CD4-positive, alpha-beta memory T cell (primary cell): ENCODE measurements at regions of chr16 and their contacts with region 1.

Region 1: GRCh38 chr16:2155091-2156021 is at the start of gene TRAF7:
- DNase-seq: peak; percentile 97 to 100 (median 99)
- H3K4me3 ChIP-seq: peak within 1 kb of the TSS; percentile 75 to 79
- H3K4me3 Mint-ChIP-seq: peak within 1 kb of the TSS; percentile 94 to 98 (median 95)
- H3K27ac ChIP-seq: peak within 1 kb of the TSS; percentile 83
- H3K27ac Mint-ChIP-seq: peak within 1 kb of the TSS; percentile 75 to 98 (median 94)
- H3K4me1 ChIP-seq: peaks cover 70% of the 10 kb centered on the region
- H3K4me1 Mint-ChIP-seq: peaks cover 30 to 63% (median 45%) of the 10 kb centered on the region in 4 donors
- H3K27me3 ChIP-seq: no peaks in the 10 kb centered on the region
- H3K27me3 Mint-ChIP-seq: no peaks in the 10 kb centered on the region
- total RNA-seq, gene TRAF7: 40.9 to 41.9 TPM

Region 2: GRCh38 chr16:1826691-1827575 is 328.4 kb before region 1 on chr16 and contains the starts of genes FAHD1 and HAGH:
- CTCF ChIA-PET with region 1: no interaction called
- POLR2A ChIA-PET with region 1: interaction called, 10 read pairs
- intact Hi-C with region 1: no loop called
- DNase-seq: peak; percentile 90 to 98 (median 93)
- H3K4me3 ChIP-seq: peak within 1 kb of the TSS; percentile 78 to 89
- H3K4me3 Mint-ChIP-seq: peak within 1 kb of the TSS; percentile 92 to 96 (median 94)
- H3K27ac ChIP-seq: peak within 1 kb of the TSS; percentile 73
- H3K27ac Mint-ChIP-seq: peak within 1 kb of the TSS; percentile 94 to 97 (median 95)
- H3K4me1 ChIP-seq: peaks cover 43% of the 10 kb centered on the region
- H3K4me1 Mint-ChIP-seq: peaks cover 17 to 58% (median 39%) of the 10 kb centered on the region in 4 donors
- H3K27me3 ChIP-seq: no peaks in the 10 kb centered on the region
- H3K27me3 Mint-ChIP-seq: no peaks in the 10 kb centered on the region
- total RNA-seq, gene FAHD1: 7.8 to 9.6 TPM
- total RNA-seq, gene HAGH: 73.7 to 77.8 TPM

Region 3: DNA sequence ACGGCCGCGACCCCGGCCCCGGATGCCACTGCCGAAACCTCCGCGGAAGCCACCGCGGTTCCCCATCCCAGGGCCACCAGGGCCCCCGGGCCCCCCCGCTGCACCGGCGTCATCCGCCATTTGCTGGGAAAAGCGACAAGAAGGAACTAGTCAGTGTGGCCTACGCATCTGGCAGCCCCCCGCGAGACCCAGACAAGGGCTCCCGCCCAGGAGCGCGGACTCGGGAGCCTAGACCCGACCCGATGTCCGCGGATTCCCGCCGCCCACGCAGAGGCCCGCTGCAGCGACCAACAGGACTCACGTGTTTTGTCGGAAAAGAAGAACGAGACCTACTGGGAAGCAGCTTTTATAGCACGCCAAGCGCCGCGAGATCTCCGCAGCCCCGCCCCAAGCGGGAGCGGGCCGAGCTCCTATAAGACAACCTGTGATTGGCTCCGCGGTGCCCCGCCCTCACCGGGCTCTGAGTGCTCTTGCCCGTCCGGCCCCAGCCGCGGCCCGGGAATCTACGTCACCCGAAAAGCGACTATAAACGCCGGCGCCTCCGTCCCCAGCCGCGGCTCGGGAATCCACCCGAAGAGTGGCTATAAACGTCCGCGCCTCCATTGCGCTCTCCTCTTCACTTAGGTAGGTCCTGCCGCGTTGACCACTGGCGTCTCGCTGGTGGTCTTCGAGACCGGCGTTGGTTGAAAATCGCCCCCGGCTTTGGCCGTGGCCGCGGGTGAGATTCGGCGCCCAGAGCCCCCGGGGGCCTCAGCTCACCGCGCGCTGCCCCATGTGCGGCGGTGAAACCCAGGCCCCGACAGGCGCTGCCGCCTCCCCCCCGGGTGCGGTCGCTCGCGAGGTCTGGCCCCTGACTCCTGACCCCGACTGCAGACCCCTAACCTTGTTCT is 190.6 kb before region 1 on chr16 and contains the start of gene RPS2:
- CTCF ChIA-PET with region 1: interaction called, 3 read pairs
- POLR2A ChIA-PET with region 1: interaction called, 75 read pairs
- intact Hi-C with region 1: loop called (anchors 1 kb)
- DNase-seq: peak; percentile 97 to 99 (median 99)
- H3K4me3 ChIP-seq: peak within 1 kb of the TSS; percentile 78 to 86
- H3K4me3 Mint-ChIP-seq: peak within 1 kb of the TSS; percentile 91 to 97 (median 94)
- H3K27ac ChIP-seq: peak within 1 kb of the TSS; percentile 97
- H3K27ac Mint-ChIP-seq: peak within 1 kb of the TSS; percentile 97 to 99 (median 98)
- H3K4me1 ChIP-seq: peaks cover 50% of the 10 kb centered on the region
- H3K4me1 Mint-ChIP-seq: peaks cover 28 to 59% (median 42%) of the 10 kb centered on the region in 4 donors
- H3K27me3 ChIP-seq: no peaks in the 10 kb centered on the region
- H3K27me3 Mint-ChIP-seq: no peaks in the 10 kb centered on the region
- total RNA-seq, gene RPS2: 2,828 to 2,894 TPM

Region 4: DNA sequence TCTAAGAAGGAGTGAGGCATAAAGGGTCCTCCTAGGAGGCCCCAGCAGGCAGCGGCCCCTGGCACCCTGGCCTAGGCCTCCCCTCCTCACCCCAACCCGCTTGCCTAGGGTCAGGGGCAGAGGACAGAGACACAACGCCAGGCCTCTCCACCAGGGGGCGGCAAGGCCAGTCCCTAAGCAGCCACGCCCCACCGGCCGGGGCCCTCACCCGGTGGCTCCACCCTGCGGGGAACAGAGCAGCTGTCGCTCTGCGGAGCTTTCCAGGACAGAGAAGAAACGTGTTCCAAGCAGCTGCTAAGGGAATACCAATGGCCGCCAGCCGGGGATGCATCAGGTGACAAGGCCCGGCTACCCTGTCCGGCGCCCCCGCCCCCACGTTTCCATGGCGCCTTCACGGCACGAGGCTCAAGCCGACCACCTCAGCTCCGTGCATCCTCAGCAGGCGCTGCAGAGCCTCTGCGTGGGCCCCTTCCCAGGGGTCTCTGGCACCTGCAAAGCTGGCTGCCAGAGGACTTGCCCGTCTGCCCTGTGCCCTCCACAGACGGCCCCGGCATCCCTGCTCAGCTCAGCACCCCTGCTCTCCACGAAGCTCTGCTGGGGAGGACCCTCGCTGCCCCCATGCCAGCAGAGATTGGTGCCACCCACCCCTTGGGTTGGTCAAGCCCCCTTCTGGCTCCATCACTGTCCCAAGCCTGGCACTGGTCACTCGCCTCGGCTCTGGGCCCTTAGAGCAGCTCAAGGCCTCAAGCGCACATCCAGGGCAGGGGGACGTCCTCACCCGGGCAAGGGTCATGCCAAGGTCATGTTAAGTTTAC is 151.3 kb before region 1 on chr16:
- CTCF ChIA-PET with region 1: interaction called, 14 read pairs
- POLR2A ChIA-PET with region 1: interaction called, 18 read pairs
- intact Hi-C with region 1: no loop called
- DNase-seq: peak; percentile 82 to 87 (median 83)
- H3K4me3 ChIP-seq: no peak overlapping the region
- H3K4me3 Mint-ChIP-seq: peak overlapping the region in 1 of 8 donors; percentile 17
- H3K27ac ChIP-seq: no peak overlapping the region
- H3K27ac Mint-ChIP-seq: no peak overlapping the region
- H3K4me1 ChIP-seq: peaks cover 40% of the 10 kb centered on the region
- H3K4me1 Mint-ChIP-seq: peaks cover 18 to 47% (median 27%) of the 10 kb centered on the region in 4 donors
- H3K27me3 ChIP-seq: no peaks in the 10 kb centered on the region
- H3K27me3 Mint-ChIP-seq: no peaks in the 10 kb centered on the region

Region 5: GRCh38 chr16:2090777-2091546 is 64.4 kb before region 1 on chr16:
- CTCF ChIA-PET with region 1: no interaction called
- POLR2A ChIA-PET with region 1: no interaction called
- intact Hi-C with region 1: no loop called
- DNase-seq: peak in 4 of 5 donors; percentile 25 to 43 (median 38)
- H3K4me3 ChIP-seq: no peak overlapping the region
- H3K4me3 Mint-ChIP-seq: peak overlapping the region in 1 of 8 donors; percentile 34
- H3K27ac ChIP-seq: no peak overlapping the region
- H3K27ac Mint-ChIP-seq: peak overlapping the region in 1 of 7 donors; percentile 29
- H3K4me1 ChIP-seq: no peaks in the 10 kb centered on the region
- H3K4me1 Mint-ChIP-seq: no peaks in the 10 kb centered on the region
- H3K27me3 ChIP-seq: no peaks in the 10 kb centered on the region
- H3K27me3 Mint-ChIP-seq: no peaks in the 10 kb centered on the region

Region 6: DNA sequence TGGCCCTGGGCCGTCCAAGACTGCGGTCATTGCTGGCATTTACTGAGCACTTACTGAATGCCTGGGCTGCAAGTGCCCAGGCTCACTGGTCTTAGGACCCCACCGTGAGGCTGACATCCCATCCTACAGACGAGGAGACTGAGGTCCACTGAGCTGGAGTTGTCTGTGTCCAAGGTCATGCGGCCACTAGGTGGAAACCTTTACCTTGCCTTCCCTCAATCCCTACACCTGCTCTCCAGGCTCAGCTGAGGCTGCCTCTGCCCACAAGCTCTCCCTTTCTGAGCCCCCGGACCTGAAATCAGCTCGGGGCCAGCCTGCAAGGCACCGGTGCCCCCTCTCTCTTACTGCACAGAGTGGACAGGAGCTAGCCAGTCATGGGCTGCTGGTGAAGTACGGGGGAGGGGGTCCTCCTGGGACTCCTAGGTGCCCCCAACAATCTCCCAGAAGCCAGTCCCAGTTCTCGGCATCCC is 39.5 kb after region 1 on chr16:
- CTCF ChIA-PET with region 1: no interaction called
- POLR2A ChIA-PET with region 1: interaction called, 9 read pairs
- intact Hi-C with region 1: loop called (anchors 1 kb)
- DNase-seq: peak; percentile 55 to 61 (median 57)
- H3K4me3 ChIP-seq: no peak overlapping the region
- H3K4me3 Mint-ChIP-seq: peak overlapping the region in 4 of 8 donors; percentile 49 to 80 (median 64)
- H3K27ac ChIP-seq: no peak overlapping the region
- H3K27ac Mint-ChIP-seq: peak overlapping the region in 1 of 7 donors; percentile 55
- H3K4me1 ChIP-seq: peaks cover 11% of the 10 kb centered on the region
- H3K4me1 Mint-ChIP-seq: peaks cover 2 to 13% (median 7%) of the 10 kb centered on the region in 4 donors
- H3K27me3 ChIP-seq: peaks cover 30% of the 10 kb centered on the region
- H3K27me3 Mint-ChIP-seq: peaks cover 15 to 19% of the 10 kb centered on the region in 2 donors

Region 7: DNA sequence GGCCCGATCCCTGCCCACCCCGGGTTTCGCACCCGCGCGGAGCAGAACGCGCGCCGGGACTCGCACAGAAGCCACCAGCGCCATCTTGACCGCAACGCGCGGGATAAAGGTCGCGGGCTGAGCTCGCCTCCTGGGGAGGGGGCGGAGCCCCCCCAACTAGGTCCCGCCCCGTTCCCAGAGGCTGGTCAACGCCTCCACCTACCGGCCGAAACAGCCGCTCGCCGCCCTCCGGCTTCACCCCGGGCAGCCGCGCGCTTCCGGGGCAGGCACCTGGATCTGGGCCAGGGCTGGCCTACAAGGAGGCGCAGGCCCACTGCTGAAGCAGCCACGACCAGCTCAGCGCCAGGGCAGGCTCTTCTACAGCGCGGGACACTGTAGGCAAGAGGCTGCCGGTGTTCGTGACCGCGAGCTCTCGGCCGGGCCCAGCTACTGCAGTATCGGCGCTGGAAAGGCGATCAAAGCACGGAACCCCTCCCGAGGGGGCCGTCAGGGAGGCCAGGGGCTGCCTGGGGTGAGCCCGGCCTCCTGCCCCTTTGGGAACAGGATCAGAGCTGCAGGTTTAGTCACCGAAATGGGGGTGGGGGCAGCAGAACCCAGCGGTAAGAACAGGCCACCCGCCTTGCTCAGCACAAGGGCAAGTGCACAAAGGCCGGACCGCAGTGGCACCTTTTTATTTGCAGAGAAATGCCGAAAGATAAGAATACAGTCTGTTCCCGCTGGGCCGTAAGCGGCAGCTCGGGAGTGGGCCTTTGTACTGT is 96.3 kb after region 1 on chr16 and contains the start of gene ECI1:
- CTCF ChIA-PET with region 1: interaction called, 4 read pairs
- POLR2A ChIA-PET with region 1: interaction called, 17 read pairs
- intact Hi-C with region 1: loop called (anchors 2 kb)
- DNase-seq: peak; percentile 65 to 81 (median 72)
- H3K4me3 ChIP-seq: peak within 1 kb of the TSS in 1 of 2 donors; percentile 66
- H3K4me3 Mint-ChIP-seq: peak within 1 kb of the TSS; percentile 87 to 93 (median 90)
- H3K27ac ChIP-seq: peak within 1 kb of the TSS; percentile 61
- H3K27ac Mint-ChIP-seq: peak within 1 kb of the TSS; percentile 88 to 96 (median 91)
- H3K4me1 ChIP-seq: peaks cover 10% of the 10 kb centered on the region
- H3K4me1 Mint-ChIP-seq: peaks cover 1 to 12% (median 5%) of the 10 kb centered on the region in 4 donors
- H3K27me3 ChIP-seq: no peaks in the 10 kb centered on the region
- H3K27me3 Mint-ChIP-seq: no peaks in the 10 kb centered on the region
- total RNA-seq, gene ECI1: 33.0 to 36.6 TPM

Region 8: GRCh38 chr16:2278272-2278608 is 122.9 kb after region 1 on chr16:
- CTCF ChIA-PET with region 1: no interaction called
- POLR2A ChIA-PET with region 1: no interaction called
- intact Hi-C with region 1: no loop called
- DNase-seq: no peak
- H3K4me3 ChIP-seq: no peak overlapping the region
- H3K4me3 Mint-ChIP-seq: no peak overlapping the region
- H3K27ac ChIP-seq: no peak overlapping the region
- H3K27ac Mint-ChIP-seq: no peak overlapping the region
- H3K4me1 ChIP-seq: no peaks in the 10 kb centered on the region
- H3K4me1 Mint-ChIP-seq: no peaks in the 10 kb centered on the region
- H3K27me3 ChIP-seq: no peaks in the 10 kb centered on the region
- H3K27me3 Mint-ChIP-seq: no peaks in the 10 kb centered on the region